ENCODE measurements at regions of chr6 and their contacts with region 1.

Region 1: GRCh38 chr6:154030646-154031045 is 8.4 kb upstream of the OPRM1 start:
- DNase-seq: no peak
- H3K4me3 ChIP-seq: no peak overlapping the region
- H3K27ac ChIP-seq: no peak overlapping the region
- H3K4me1 ChIP-seq: no peaks in the 10 kb centered on the region
- H3K27me3 ChIP-seq: no peaks in the 10 kb centered on the region
- CTCF ChIP-seq: no peak
- POLR2A ChIP-seq: no peak

Region 2: GRCh38 chr6:152828431-152828830 is 1202.2 kb before region 1 on chr6:
- intact Hi-C with region 1: loop called (anchors 5 kb)
- DNase-seq: no peak
- H3K4me3 ChIP-seq: no peak overlapping the region
- H3K27ac ChIP-seq: no peak overlapping the region
- H3K4me1 ChIP-seq: no peaks in the 10 kb centered on the region
- H3K27me3 ChIP-seq: no peaks in the 10 kb centered on the region
- CTCF ChIP-seq: no peak
- POLR2A ChIP-seq: no peak

Region 3: GRCh38 chr6:154012852-154013251 is 17.8 kb before region 1 on chr6:
- intact Hi-C with region 1: loop called (anchors 1 kb)
- DNase-seq: no peak
- H3K4me3 ChIP-seq: no peak overlapping the region
- H3K27ac ChIP-seq: no peak overlapping the region
- H3K4me1 ChIP-seq: no peaks in the 10 kb centered on the region
- H3K27me3 ChIP-seq: no peaks in the 10 kb centered on the region
- CTCF ChIP-seq: no peak
- POLR2A ChIP-seq: no peak

Region 4: DNA sequence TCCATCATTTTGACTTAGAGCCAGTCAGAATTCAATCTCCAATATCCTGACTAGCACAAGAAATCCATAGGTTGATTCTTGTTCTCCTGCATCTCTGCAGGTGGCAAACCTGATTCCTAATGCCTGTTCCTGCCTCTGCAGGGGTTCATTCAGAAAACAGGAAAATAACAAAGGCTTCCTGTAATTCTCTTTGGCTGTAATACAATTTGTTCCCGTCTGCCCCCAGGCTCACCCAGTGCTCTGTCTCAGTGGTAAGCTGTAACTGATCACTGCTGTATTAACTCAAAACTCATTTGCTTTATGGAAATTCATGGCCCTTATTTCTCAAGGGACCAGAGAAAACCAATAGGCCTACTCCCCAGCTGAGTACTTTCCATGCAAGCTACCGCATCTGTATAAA is 97.0 kb after region 1 on chr6:
- intact Hi-C with region 1: no loop called
- DNase-seq: no peak
- H3K4me3 ChIP-seq: no peak overlapping the region
- H3K27ac ChIP-seq: no peak overlapping the region
- H3K4me1 ChIP-seq: no peaks in the 10 kb centered on the region
- H3K27me3 ChIP-seq: no peaks in the 10 kb centered on the region
- CTCF ChIP-seq: no peak
- POLR2A ChIP-seq: no peak

Measured in breast epithelium (tissue), 4 donors.